H1 (cell line): ENCODE measurements at regions of chr5 and their contacts with region 1.

Region 1: GRCh38 chr5:141672848-141673813 is 8.9 kb downstream of the ARAP3 start:
- DNase-seq: no peak
- H3K4me3 ChIP-seq: no peak overlapping the region
- H3K27ac ChIP-seq: no peak overlapping the region; the same call in 1 of the 2 replicates
- H3K4me1 ChIP-seq: peaks cover 2 to 13% (median 8%) of the 10 kb centered on the region in 4 experiments; a peak in 5 of 7 replicates
- H3K27me3 ChIP-seq: no peaks in the 10 kb centered on the region
- CTCF ChIP-seq: no peak
- EP300 ChIP-seq: no peak
- POLR2A ChIP-seq: no peak
- RAD21 ChIP-seq: no peak

Region 2: DNA sequence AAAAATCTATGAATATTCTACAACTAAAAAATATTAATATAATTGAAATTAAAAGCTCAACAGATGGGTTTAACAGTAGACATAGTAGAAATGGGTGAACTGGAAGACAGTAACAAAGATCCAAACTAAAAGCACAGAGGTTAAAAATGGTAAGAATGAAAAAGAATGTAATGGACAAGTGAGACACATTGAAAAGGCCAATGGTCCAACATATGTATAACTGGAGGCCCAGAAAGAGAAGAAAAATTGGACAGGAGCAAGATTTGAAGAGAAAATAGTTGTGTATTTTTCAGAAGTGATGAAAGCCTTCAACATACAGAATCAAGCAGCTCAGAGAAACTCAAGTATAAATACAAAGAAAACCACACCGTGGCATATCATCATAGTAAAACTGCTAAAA is 125.6 kb before region 1 on chr5:
- CTCF ChIA-PET with region 1: no interaction called
- POLR2A ChIA-PET with region 1: no interaction called
- DNase-seq: no peak
- H3K4me3 ChIP-seq: no peak overlapping the region; a peak in 1 of 8 replicates
- H3K27ac ChIP-seq: no peak overlapping the region
- H3K4me1 ChIP-seq: no peaks in the 10 kb centered on the region
- H3K27me3 ChIP-seq: no peaks in the 10 kb centered on the region
- CTCF ChIP-seq: no peak
- EP300 ChIP-seq: no peak
- POLR2A ChIP-seq: no peak
- RAD21 ChIP-seq: no peak

Region 3: GRCh38 chr5:141657937-141658545 is 15.1 kb before region 1 on chr5:
- CTCF ChIA-PET with region 1: interaction called, 25 read pairs
- POLR2A ChIA-PET with region 1: interaction called, 6 read pairs
- DNase-seq: no peak
- H3K4me3 ChIP-seq: no peak overlapping the region
- H3K27ac ChIP-seq: no peak overlapping the region
- H3K4me1 ChIP-seq: no peaks in the 10 kb centered on the region; a peak in 2 of 7 replicates
- H3K27me3 ChIP-seq: no peaks in the 10 kb centered on the region
- CTCF ChIP-seq: no peak
- EP300 ChIP-seq: no peak
- POLR2A ChIP-seq: no peak
- RAD21 ChIP-seq: no peak